Natural killer cell (primary cell): ENCODE measurements at regions of chr20 and their contacts with region 1.

Region 1: GRCh38 chr20:31605031-31605901 is at the start of gene ID1:
- DNase-seq: peak; percentile 89 to 94
- ATAC-seq: peak; percentile 87 to 97 (median 88)
- H3K4me3 ChIP-seq: peak within 1 kb of the TSS; percentile 47
- H3K4me3 Mint-ChIP-seq: peak within 1 kb of the TSS; percentile 96
- H3K27ac ChIP-seq: no peak within 1 kb of the TSS
- H3K27ac Mint-ChIP-seq: peak within 1 kb of the TSS; percentile 80 to 93
- H3K4me1 ChIP-seq: peaks cover 28% of the 10 kb centered on the region
- H3K4me1 Mint-ChIP-seq: peaks cover 28 to 33% of the 10 kb centered on the region in 2 donors
- H3K27me3 ChIP-seq: peaks cover 27% of the 10 kb centered on the region
- H3K27me3 Mint-ChIP-seq: peaks cover 20 to 37% of the 10 kb centered on the region in 2 donors
- CTCF ChIP-seq: no peak
- total RNA-seq, gene ID1: 5.6 to 10.1 (median 6.4) TPM

Region 2: GRCh38 chr20:31527266-31527665 is 78.0 kb before region 1 on chr20:
- intact Hi-C with region 1: no loop called
- DNase-seq: no peak
- ATAC-seq: no peak
- H3K4me3 ChIP-seq: no peak overlapping the region
- H3K4me3 Mint-ChIP-seq: no peak overlapping the region
- H3K27ac ChIP-seq: no peak overlapping the region
- H3K27ac Mint-ChIP-seq: no peak overlapping the region
- H3K4me1 ChIP-seq: no peaks in the 10 kb centered on the region
- H3K4me1 Mint-ChIP-seq: peaks cover 15 to 21% of the 10 kb centered on the region in 2 donors
- H3K27me3 ChIP-seq: no peaks in the 10 kb centered on the region
- H3K27me3 Mint-ChIP-seq: no peaks in the 10 kb centered on the region
- CTCF ChIP-seq: no peak

Region 3: DNA sequence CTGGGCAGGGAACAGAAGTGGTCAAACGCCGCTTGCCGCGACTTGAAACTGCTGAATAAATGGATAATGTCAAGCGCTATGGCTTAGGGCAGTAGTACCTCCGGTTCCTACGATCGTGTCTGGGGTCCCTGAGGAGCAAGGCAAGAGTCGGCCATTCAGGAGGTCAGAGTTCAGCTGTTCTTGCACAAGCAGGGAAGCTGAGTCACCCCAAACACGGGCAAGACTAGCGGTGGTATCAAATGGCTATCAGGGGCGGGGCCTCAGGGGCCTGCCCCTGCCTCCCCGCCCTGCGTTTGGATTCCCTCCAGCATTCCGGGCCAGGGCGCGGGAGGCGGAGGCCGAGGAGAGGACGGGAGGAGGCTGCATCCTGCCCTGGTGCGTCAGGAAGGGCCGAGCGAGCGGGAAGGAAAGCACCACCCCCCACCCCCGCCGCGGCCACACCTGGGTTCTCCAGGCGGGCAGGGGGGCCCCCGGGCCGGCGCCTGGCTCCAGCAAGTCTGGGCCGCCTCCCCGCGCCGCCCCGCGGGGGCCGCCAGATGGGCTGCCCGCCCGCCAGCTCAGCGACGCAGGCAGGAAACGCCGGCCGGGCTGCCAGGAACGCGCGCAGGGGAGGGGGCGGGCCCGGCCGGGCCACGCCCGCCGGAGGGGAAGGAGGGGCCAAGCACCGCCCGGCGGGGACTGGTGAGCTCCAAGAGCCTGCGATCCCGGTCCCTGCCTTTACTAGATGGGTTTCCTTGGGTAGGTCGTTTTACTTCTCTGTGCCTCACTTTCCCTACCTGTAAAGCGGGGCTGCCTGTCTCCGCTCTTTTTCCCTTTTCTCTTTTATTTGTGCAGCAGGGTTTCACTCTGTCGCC is 32.3 kb before region 1 on chr20:
- intact Hi-C with region 1: loop called (anchors 1 kb)
- DNase-seq: peak; percentile 78 to 93
- ATAC-seq: peak; percentile 90 to 97 (median 91)
- H3K4me3 ChIP-seq: peak overlapping the region; percentile 66
- H3K4me3 Mint-ChIP-seq: peak overlapping the region; percentile 93
- H3K27ac ChIP-seq: peak overlapping the region; percentile 74
- H3K27ac Mint-ChIP-seq: peak overlapping the region; percentile 88 to 92
- H3K4me1 ChIP-seq: peaks cover 13% of the 10 kb centered on the region
- H3K4me1 Mint-ChIP-seq: peaks cover 18 to 26% of the 10 kb centered on the region in 2 donors
- H3K27me3 ChIP-seq: no peaks in the 10 kb centered on the region
- H3K27me3 Mint-ChIP-seq: no peaks in the 10 kb centered on the region
- CTCF ChIP-seq: no peak